Activated T-helper 2 cell treated with anti-CD3 and anti-CD28 coated beads, Interferon-gamma antibody, Interleukin-2, Interleukin-4, amounts not matched to agents 10 μg/mL and 5 μg/mL and 100 μg/mL, durations not matched to agents 14 hours and 24 hours and 36 hours (primary cell): ENCODE measurements at regions of chr2 and their contacts with region 1.

Region 1: DNA sequence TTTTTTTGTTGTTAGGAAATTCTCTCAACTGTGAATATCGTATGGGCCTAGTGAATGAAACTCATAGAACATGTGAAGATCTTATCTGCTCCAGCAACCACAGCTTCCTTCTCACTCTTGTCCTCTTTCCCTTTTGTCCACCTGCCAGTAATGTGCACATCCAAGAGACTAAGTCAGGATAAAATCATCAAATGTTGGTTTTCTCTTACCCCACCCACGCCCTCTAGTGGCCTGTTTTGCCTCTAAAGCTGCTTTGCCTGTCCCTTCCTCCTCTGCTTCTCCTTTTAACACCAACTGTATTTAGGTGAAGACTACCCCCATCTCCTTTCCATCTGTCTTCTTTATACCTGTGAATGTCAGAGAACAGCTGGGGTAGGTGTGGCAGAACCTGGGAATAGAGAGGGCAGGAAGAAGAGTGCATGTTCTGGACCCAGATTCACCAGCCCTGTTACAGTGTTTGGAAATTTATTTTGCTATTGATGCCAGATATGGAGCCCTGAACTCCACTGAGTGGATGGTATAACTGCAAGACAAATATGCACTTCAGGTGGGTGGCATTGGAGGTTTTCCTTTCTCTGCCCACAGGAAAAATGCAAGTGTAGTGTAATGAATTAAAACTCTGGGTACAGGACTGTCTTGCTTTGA is 8.4 kb upstream of the MGAT5 start:
- DNase-seq: peak; percentile 41
- H3K4me3 Mint-ChIP-seq: no peak overlapping the region
- H3K27ac Mint-ChIP-seq: no peak overlapping the region
- H3K4me1 Mint-ChIP-seq: peaks cover 31% of the 10 kb centered on the region
- H3K27me3 Mint-ChIP-seq: peaks cover 68% of the 10 kb centered on the region

Region 2: DNA sequence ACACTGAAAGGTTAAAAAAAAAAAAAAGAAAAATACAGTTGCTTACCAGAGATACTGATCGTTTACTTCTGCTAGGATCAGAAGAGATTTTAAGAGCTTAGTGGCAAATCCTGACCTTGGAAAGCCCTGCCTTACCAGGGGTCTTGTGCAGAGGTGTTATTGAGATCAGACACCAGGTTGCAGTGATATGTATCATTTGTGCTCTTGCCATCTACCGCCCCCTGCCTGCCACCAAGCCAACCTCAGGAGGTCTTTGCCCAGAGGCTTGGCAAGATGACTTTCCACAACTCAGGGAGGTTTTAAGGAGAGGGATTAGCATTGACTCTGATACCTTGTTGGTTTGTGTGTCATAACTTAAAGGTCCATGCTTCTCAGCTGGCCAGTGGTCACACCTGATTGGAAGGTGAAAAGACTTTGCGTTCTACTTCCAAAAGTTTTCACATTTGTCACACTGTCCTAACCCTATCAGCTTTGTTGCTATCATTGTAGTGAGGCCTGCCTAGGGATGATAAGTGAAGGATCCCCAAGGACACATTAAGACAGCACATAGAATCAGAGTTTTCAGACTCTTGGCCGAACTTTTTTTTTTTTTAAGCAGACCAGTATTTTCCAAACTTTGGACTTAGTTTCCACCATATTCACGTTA is 37.8 kb before region 1 on chr2:
- intact Hi-C with region 1: loop called (anchors 5 kb)
- DNase-seq: no peak
- H3K4me3 Mint-ChIP-seq: no peak overlapping the region
- H3K27ac Mint-ChIP-seq: no peak overlapping the region
- H3K4me1 Mint-ChIP-seq: peaks cover 11% of the 10 kb centered on the region
- H3K27me3 Mint-ChIP-seq: no peaks in the 10 kb centered on the region

Region 3: GRCh38 chr2:134224005-134224404 is 21.5 kb before region 1 on chr2:
- intact Hi-C with region 1: no loop called
- DNase-seq: no peak
- H3K4me3 Mint-ChIP-seq: no peak overlapping the region
- H3K27ac Mint-ChIP-seq: no peak overlapping the region
- H3K4me1 Mint-ChIP-seq: peaks cover 5% of the 10 kb centered on the region
- H3K27me3 Mint-ChIP-seq: peaks cover 52% of the 10 kb centered on the region

Region 4: DNA sequence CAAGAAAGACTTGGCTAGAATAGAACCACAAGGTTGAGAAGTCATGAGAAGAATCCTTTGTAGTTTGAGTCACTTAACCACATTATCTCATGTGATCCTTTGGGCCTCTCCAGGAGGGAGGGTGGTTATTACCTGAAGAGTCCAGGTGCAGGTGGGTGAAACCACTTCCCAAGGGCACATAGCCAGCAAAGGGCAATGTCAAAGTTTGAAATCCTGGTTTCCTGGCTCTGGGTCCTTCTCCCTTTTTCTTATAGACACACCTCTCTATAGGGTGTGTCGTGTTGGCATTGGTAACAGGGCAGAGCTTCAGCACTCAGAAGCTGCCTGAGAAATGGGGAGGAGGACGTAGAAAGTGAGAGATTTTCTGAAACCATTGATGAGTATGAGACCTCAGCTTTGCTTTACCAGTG is 146.3 kb after region 1 on chr2:
- intact Hi-C with region 1: no loop called
- DNase-seq: no peak
- H3K4me3 Mint-ChIP-seq: no peak overlapping the region
- H3K27ac Mint-ChIP-seq: no peak overlapping the region
- H3K4me1 Mint-ChIP-seq: no peaks in the 10 kb centered on the region
- H3K27me3 Mint-ChIP-seq: no peaks in the 10 kb centered on the region